Esophagus muscularis mucosa (tissue), 4 donors: ENCODE measurements at regions of chr1 and their contacts with region 1.

Region 1: DNA sequence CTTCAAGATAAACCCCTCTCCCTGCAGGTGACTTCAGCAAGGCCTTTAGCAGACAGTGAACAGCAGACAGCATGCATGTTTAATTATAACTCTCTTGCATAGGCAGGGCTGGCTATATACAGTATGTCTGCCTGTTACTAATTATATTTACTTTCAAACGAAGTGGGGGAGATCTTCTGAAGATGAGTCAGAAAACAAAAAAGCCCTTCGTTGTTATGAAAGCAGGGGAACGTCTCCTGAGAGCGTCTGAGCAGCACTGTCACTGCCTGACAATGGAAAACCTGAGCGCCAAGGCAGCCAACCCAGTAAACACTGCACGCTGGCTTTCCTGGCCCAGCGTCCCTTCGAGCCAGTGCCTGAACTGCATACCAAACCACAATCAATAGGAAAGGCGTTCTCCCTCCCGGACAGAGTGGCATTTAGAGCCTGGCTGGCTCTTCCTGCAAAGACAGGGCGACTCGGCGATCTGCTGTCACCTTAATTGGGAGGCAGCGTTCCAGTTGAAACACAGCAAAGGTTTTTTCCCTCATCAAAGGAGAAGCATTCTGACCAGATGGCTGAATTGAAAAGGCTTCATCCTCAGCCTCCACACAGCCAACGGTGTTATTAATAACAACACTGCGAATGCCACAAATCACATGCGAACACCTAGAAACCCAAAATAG is 54.0 kb downstream of the TOMM20 start:
- DNase-seq: no peak
- H3K4me3 ChIP-seq: peak overlapping the region in 1 of 4 donors; percentile 5
- H3K27ac ChIP-seq: peak overlapping the region; percentile 83 to 89 (median 84)
- H3K4me1 ChIP-seq: peaks cover 61 to 70% (median 68%) of the 10 kb centered on the region in 4 donors
- H3K27me3 ChIP-seq: no peaks in the 10 kb centered on the region
- CTCF ChIP-seq: no peak
- EP300 ChIP-seq: no peak
- POLR2A ChIP-seq: no peak

Region 2: GRCh38 chr1:234617131-234617985 is 457.3 kb before region 1 on chr1:
- intact Hi-C with region 1: loop called (anchors 5 kb)
- DNase-seq: no peak
- H3K4me3 ChIP-seq: no peak overlapping the region
- H3K27ac ChIP-seq: peak overlapping the region; percentile 1 to 66 (median 56)
- H3K4me1 ChIP-seq: peaks cover 24 to 68% (median 55%) of the 10 kb centered on the region in 4 donors
- H3K27me3 ChIP-seq: no peaks in the 10 kb centered on the region
- CTCF ChIP-seq: no peak
- EP300 ChIP-seq: no peak
- POLR2A ChIP-seq: no peak

Region 3: DNA sequence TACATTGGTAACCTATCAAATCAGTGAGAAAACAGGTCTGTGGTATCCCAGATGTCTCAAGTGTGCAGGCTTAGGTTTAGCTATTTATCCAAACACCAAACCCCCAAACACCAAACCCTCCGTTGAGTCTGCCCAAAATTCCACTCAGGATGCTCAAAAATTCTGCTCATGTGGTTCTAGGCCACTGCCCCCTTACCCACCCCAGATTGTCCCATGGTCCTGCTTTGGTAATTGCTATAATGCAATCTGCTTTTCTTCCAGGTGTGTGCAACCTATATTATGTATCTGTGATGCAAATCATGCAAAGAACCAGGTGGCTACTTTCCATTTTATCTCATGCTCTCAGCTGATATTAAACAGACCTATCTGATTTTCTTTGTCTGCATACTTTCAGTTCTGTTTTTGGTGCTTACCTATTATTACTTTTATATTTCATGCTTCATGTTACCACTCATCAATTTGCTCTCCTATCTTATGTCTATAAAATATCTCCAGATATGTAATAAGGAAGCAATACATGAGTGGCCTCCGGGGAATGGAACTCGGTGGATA is 69.7 kb before region 1 on chr1:
- intact Hi-C with region 1: loop called (anchors 5 kb)
- DNase-seq: no peak
- H3K4me3 ChIP-seq: no peak overlapping the region
- H3K27ac ChIP-seq: no peak overlapping the region
- H3K4me1 ChIP-seq: peaks cover 0 to 17% (median 14%) of the 10 kb centered on the region in 4 donors
- H3K27me3 ChIP-seq: no peaks in the 10 kb centered on the region
- CTCF ChIP-seq: no peak
- EP300 ChIP-seq: no peak
- POLR2A ChIP-seq: no peak

Region 4: GRCh38 chr1:235375919-235376605 is 301.4 kb after region 1 on chr1:
- intact Hi-C with region 1: no loop called
- DNase-seq: no peak
- H3K4me3 ChIP-seq: no peak overlapping the region
- H3K27ac ChIP-seq: no peak overlapping the region
- H3K4me1 ChIP-seq: no peaks in the 10 kb centered on the region
- H3K27me3 ChIP-seq: no peaks in the 10 kb centered on the region
- CTCF ChIP-seq: no peak
- EP300 ChIP-seq: no peak
- POLR2A ChIP-seq: no peak